ENCODE measurements at regions of chr21 and their contacts with region 1.

Region 1: DNA sequence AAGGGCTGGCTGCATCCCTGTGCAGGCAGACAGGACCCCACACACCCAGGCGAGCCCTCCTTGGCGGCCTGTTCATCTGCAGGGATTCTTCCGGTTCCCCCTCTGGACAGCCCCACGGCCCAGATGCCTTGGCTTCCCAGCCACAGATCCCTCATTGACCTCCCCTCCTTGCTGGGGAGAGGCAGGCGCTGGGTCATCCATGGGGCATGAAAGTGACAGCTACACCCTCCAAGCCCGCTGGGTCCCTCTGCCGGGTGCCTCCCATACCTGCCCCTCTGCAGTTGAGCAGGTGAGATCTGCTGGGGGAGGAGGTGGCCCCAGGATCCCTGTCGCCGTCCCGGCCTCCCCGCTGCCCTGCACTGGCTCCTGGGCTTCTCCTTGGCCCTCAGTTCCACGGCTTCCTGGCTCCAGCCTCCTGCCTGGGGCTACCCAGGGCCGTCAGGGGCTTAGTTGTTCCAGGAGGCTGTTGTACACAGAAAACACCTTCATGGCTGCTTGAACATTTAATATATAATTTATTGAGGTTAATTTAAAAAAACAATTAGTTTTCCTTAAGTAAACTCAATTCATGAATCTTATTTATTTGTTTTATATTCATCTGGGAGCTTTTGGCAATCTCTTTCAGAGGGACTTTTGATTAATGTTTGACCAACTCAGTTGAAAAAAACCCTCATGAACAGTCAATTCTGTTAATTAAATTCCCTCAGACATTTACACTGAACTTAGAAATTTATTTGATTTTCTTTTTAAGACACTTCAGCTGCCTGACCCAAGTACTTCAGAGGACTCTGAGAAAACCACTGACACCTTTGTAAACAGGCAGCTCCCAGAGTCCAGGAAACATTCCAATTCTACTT is 67.6 kb upstream of the ABCG1 start:
- DNase-seq: peak in 1 of 2 donors; percentile 12
- ATAC-seq: no peak
- H3K4me3 ChIP-seq: no peak overlapping the region
- H3K4me3 Mint-ChIP-seq: no peak overlapping the region
- H3K27ac ChIP-seq: no peak overlapping the region
- H3K27ac Mint-ChIP-seq: no peak overlapping the region
- H3K4me1 ChIP-seq: peaks cover 22% of the 10 kb centered on the region
- H3K4me1 Mint-ChIP-seq: peaks cover 25 to 27% of the 10 kb centered on the region in 2 donors
- H3K27me3 ChIP-seq: no peaks in the 10 kb centered on the region
- H3K27me3 Mint-ChIP-seq: peaks cover 3 to 7% of the 10 kb centered on the region in 2 donors
- CTCF ChIP-seq: no peak

Region 2: DNA sequence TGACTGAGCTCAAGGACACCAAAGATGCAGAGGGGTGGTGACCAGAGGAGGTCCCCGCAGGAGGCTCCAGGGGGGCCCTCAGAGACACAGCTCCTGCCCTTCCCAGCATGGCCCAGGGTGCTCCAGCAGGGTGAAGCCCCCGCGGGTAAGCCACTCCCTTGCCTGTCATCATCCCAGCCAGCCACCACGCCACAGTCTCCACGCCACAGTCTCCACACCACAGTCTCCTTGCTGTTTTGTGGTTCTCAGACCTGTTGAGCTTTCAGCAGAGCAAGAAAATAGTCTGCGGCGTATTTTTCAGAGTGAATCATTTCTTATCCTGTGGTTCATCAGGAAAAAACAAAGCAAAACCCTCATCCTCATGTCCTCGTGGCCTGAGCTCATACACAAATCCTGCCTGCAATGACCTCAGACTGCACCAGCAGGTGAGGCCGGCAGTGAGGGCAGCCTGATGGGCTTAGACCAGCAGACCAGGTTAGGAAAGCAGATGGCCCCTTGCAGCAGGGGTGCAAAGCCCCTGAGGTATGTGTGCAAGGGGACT is 41.9 kb after region 1 on chr21:
- intact Hi-C with region 1: loop called (anchors 5 kb)
- DNase-seq: peak; percentile 68 to 74
- ATAC-seq: peak; percentile 31 to 49 (median 40)
- H3K4me3 ChIP-seq: no peak overlapping the region
- H3K4me3 Mint-ChIP-seq: peak overlapping the region; percentile 88
- H3K27ac ChIP-seq: peak overlapping the region; percentile 24
- H3K27ac Mint-ChIP-seq: peak overlapping the region; percentile 75 to 91
- H3K4me1 ChIP-seq: peaks cover 74% of the 10 kb centered on the region
- H3K4me1 Mint-ChIP-seq: peaks cover 60 to 70% of the 10 kb centered on the region in 2 donors
- H3K27me3 ChIP-seq: no peaks in the 10 kb centered on the region
- H3K27me3 Mint-ChIP-seq: no peaks in the 10 kb centered on the region
- CTCF ChIP-seq: no peak